GM10248 (cell line): ENCODE measurements at regions of chr1 and their contacts with region 1.

Region 1: DNA sequence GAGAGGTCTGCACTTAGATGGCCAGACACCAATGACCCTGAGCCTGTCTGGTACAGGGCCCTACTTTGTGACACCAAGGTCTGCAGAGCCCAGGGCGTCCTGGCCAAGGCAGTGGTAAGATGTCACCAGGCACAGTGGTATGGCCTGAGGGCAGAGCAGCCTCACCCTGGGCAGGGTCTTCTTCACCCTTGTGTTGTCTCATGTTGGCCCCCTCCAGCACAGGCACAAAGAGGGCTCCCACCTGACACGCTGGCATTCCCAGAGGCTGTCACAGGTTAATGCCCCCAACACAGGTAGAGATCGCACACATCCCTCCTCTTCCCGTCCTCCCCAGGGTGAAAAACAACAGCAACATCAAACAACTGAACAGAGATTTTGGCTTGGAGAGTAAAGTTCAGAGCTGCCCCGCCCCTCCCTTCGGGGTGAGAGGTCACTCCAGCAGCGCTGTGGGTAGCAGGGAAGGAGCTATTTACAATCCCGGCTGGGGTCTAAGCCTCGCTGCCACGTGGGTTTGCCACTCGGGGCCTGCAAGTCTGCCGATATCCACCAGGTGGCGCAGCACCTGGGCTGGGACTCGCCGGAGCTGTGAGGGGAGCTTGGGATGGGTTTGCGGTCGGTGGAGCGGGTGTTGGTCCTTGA is 12.6 kb downstream of the EFNA3 start:
- DNase-seq: peak; percentile 84
- CTCF ChIP-seq: peak; percentile 95

Region 2: GRCh38 chr1:154772606-154773506 is 318.3 kb before region 1 on chr1:
- CTCF ChIA-PET with region 1: no interaction called
- POLR2A ChIA-PET with region 1: no interaction called
- DNase-seq: no peak
- CTCF ChIP-seq: no peak

Region 3: DNA sequence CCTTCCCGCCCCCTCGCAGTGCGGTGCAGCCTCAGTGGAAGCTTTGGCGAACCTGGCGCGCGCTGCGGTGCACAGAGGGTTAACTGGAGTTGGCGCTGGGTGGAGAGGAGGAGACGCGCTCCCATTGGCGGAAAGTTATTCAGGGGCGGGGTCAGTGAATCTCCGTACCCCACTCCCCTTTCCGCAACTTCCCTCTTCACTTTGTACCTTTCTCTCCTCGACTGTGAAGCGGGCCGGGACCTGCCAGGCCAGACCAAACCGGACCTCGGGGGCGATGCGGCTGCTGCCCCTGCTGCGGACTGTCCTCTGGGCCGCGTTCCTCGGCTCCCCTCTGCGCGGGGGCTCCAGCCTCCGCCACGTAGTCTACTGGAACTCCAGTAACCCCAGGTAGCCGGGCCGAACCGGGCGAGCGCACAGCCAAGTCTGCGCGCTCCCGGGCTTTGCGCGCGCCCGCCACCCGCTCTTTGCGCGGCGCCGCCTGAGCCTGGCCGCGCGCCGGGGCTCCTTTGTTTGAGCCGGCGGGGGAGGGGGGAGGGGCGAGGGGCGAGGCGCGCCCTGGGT is 27.6 kb before region 1 on chr1 and contains the start of gene EFNA4:
- CTCF ChIA-PET with region 1: interaction called, 169 read pairs
- POLR2A ChIA-PET with region 1: no interaction called
- DNase-seq: peak; percentile 91
- CTCF ChIP-seq: no peak

Region 4: DNA sequence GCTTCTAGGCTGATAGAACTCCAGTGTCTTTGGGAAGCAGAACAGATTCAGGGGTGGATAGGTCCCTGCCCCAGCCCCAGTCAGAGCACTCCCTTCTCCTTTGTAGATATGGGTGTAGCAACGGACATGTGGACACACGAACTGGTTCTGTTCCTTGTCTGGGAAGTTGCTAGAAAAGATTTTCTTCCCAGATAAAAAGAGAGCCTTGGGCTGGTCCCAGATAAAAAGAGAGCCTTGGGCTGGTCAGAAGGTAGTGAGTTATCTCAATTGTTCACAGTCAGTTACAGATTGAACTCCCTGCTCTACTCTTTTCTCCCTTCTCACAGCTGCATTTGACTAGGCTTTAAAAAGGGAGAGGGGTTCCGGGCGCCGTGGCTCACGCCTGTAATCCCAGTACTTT is 29.1 kb after region 1 on chr1:
- CTCF ChIA-PET with region 1: interaction called, 17 read pairs
- POLR2A ChIA-PET with region 1: no interaction called
- DNase-seq: no peak
- CTCF ChIP-seq: no peak

Region 5: DNA sequence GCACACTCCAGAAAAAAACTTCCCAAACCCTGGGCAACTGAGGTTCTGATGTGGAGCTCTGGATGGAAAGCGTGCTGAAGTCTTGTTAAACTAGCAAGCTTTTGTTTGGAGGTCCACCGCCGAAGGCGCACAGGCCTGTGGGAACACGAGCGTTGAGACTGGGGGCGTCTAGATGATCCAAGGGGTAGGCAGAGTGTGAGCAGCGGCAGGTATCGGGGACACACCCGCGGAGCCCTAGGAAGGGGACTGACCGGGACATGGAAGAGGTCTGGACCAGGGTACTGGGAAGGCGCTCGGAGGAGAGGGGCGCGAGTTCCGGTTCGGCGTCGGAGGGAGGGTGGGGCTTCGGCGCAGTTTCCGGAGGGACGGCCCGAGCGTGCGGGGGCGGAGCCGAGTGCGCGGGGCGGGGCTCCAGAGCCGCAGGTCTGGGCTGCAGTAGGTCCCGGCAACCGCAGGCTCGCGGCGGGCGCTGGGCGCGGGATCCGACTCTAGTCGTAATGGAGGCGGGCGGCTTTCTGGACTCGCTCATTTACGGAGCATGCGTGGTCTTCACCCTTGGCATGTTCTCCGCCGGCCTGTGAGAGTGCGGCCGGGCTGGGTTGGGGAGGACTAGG is 44.3 kb after region 1 on chr1 and contains the start of gene SLC50A1:
- CTCF ChIA-PET with region 1: interaction called, 26 read pairs
- POLR2A ChIA-PET with region 1: no interaction called
- DNase-seq: peak; percentile 96
- CTCF ChIP-seq: no peak

Region 6: DNA sequence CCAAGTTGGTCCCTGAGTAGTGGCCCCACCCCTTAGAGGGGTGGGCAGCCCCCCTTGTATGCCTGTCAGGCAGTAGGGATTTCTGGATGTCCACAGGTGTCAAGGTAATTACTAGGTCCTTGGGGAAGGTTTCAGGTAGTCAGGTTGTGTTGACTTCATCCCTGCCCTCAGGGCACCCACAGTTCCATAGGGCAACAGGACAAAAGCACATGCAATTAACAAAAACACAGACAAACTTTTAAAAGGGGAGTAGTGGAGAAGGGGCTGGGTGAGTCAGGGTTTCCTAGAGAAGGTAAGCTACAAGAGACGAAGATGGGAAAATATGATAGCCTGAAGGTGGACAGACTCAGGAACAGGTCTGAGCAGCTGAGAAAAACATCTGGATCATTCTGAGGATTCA is 67.8 kb after region 1 on chr1:
- CTCF ChIA-PET with region 1: interaction called, 184 read pairs
- POLR2A ChIA-PET with region 1: interaction called, 7 read pairs
- DNase-seq: no peak
- CTCF ChIP-seq: no peak

Region 7: DNA sequence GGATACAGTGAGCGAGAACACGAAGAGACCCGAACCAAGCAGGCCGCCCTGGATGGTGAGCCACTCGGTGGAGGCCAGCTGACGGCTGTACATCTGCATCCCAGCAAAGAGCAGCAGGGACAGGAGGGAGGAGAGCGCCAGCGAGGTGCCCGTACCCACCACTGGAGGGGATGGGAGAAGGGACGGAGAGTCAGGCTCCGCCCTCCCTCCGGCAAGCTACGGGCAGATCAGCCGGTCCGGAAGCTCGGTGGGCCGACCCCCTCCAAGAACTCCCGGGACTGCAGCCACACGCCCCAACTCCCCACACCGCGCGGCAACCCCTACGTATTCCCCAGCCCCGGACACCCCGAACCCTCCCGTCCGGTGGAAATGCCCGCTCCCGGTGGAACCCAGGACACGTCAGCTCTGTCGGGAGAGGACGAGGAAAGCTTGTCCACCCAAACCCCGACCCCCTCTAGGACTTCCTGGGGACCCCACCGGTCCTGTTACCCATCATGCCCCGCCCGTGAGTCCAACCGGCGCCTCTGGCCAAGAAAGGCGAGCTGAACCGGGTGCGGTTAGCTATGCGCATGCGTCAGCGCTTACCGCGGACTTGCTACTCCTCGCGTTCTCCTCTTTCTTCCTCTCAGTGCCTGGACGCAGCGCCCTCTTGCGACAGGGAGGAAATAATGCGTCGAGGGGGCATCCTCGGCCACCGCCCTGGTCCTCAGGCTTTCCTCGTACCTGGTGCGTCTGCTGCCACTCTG is 81.7 kb after region 1 on chr1 and contains the start of gene KRTCAP2:
- CTCF ChIA-PET with region 1: interaction called, 184 read pairs
- POLR2A ChIA-PET with region 1: interaction called, 5 read pairs
- DNase-seq: peak; percentile 97
- CTCF ChIP-seq: peak; percentile 98